BJ (cell line): ENCODE measurements at regions of chr17 and their contacts with region 1.

Region 1: DNA sequence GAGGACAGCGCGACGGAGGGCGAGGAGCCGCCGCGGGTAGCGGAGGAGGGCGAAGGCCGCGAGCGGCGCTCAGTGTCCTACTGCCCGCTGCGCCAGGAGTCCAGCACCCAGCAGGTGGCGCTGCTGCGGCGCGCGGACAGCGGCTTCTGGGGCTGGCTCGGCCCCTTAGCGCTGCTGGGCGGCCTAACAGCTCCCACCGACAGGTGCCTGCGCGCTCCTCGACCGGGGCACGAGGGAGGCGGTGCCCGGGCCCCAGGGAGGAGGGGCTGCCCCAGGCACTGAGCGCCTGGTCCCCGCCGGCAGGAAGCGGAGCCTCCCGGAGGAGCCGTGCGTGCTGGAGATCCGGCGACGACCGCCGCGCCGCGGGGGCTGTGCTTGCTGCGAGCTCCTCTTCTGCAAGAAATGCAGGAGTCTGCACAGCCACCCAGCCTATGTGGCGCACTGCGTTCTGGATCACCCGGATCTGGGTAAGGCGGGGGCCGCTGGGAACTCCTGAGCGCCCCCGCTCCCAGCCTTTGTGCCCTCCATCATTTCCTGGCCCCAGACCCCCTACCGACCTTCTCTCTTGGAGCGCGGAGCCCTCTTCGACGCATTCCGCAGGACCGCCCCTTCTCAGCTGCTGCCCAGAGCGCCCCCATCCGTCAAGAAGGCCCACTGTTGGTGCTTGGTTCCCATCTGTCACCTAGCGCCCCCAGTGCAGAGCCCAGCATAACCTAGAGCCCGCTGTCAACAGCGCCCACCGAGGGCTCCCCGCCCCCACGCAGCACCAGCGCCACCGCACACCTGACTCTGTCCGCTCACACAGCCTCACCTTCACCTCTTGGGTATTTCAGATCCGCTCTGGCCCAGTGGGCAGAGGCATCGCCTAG is 3.7 kb downstream of the C17orf50 start:
- DNase-seq: no peak
- H3K4me3 ChIP-seq: peak overlapping the region; percentile 34
- H3K27me3 ChIP-seq: peaks cover 11% of the 10 kb centered on the region
- CTCF ChIP-seq: peak; percentile 84

Region 2: DNA sequence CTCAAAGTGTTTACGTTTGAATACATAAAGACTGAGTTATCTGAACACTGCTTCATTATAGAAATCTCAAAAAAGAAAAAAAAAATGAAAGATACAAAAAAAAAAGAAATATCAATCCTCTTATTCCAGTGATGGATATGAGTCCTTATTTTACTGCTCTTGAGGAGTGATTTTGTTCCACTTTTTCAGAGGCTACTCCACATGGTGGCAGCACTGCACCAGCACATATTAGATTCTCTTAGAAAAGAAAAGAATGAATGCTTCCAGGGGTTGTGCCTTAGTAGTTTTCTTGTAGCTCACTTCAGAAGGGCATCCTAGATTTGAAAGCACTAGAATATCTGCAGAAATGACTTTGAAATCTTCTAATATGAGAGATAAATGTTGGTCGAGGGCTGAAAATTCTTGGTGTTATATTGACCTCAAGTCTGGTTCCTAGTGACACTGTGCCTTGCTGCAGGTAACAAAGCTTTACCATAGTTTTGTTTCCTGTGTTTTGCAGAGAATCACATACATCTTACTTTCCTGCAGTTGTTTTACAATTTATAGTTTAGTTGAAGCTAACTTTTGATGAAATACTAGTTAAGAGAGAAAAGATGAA is 151.3 kb before region 1 on chr17:
- CTCF ChIA-PET with region 1: interaction called, 21 read pairs
- POLR2A ChIA-PET with region 1: no interaction called
- DNase-seq: no peak
- H3K4me3 ChIP-seq: no peak overlapping the region
- H3K27me3 ChIP-seq: no peaks in the 10 kb centered on the region
- CTCF ChIP-seq: peak; percentile 74

Region 3: DNA sequence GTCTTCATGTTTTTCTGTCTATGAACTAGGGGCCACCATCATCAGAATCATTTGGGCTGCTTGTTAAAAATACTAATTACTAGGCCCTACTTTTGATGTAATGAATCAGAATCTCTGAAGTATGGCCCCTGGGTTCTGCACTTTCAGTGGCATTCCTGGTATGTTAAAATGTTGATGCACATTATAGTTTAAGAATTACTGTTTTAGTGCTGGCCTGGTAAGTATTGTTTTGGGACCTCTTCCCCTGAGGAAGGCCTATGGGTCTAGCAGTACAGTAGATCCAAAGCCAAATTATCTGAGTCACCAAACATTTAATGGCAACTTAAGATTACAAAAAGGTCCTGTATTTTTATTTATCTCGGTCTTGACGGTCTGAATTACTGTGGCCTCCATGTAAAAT is 118.4 kb before region 1 on chr17:
- CTCF ChIA-PET with region 1: no interaction called
- POLR2A ChIA-PET with region 1: no interaction called
- DNase-seq: no peak
- H3K4me3 ChIP-seq: no peak overlapping the region
- H3K27me3 ChIP-seq: no peaks in the 10 kb centered on the region
- CTCF ChIP-seq: no peak

Region 4: GRCh38 chr17:35684055-35684802 is 80.1 kb before region 1 on chr17:
- CTCF ChIA-PET with region 1: no interaction called
- POLR2A ChIA-PET with region 1: no interaction called
- DNase-seq: peak; percentile 26
- H3K4me3 ChIP-seq: no peak overlapping the region
- H3K27me3 ChIP-seq: no peaks in the 10 kb centered on the region
- CTCF ChIP-seq: no peak

Region 5: GRCh38 chr17:35774499-35774898 is 10.1 kb after region 1 on chr17:
- CTCF ChIA-PET with region 1: interaction called, 115 read pairs
- POLR2A ChIA-PET with region 1: no interaction called
- DNase-seq: no peak
- H3K4me3 ChIP-seq: no peak overlapping the region
- H3K27me3 ChIP-seq: peaks cover 37% of the 10 kb centered on the region
- CTCF ChIP-seq: no peak

Region 6: DNA sequence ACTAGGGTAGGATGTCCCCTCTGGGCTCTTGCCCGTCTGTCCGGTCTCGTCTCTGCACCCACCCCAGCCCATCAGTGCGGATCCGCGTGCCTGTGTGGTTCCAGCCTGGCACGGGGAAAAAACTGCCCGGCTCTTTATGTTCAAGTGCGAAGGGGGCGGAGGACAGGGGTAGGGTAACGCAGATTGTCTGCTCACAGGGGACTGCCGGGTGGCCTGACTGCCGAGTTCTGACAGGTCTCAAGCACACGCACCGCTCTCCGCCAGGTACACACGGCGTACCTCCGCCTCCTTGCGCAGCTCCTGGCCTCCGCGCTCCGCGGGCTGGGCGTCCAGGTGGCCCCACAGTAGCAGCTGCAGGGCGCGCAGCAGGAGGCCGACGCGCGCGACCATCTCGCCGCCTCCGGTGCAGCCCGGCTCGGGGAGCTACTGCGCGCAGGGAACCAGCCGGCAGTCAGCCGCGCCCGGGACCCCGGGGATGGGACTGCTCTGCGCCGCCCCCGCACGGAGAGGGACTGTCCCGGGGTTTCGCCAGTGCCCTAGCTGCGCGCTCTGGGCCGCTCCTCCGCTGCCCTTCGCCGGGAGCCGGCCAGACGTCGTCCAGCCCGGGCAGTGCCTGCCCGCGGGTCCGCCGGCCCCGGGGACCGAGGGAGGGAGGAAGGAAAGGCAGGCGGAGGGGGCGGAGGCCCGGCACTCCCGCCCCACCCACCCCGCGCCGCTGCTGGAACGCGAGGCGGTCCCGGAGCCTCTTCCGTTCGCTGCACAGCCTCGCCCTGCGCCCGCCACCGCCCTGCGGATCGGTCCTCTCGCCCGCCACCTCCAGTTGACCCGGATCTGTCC is 30.8 kb after region 1 on chr17 and contains the start of gene MMP28:
- CTCF ChIA-PET with region 1: interaction called, 52 read pairs
- POLR2A ChIA-PET with region 1: no interaction called
- DNase-seq: no peak
- H3K4me3 ChIP-seq: peak within 1 kb of the TSS; percentile 36
- H3K27me3 ChIP-seq: peaks cover 42% of the 10 kb centered on the region
- CTCF ChIP-seq: no peak
- polyA plus RNA-seq, gene MMP28: 0.15 and 0.28 TPM in 2 replicates

Region 7: GRCh38 chr17:35816723-35817122 is 52.4 kb after region 1 on chr17:
- CTCF ChIA-PET with region 1: interaction called, 425 read pairs
- POLR2A ChIA-PET with region 1: no interaction called
- DNase-seq: no peak
- H3K4me3 ChIP-seq: no peak overlapping the region
- H3K27me3 ChIP-seq: no peaks in the 10 kb centered on the region
- CTCF ChIP-seq: no peak